ENCODE measurements at regions of chr12 and their contacts with region 1.

Region 1: DNA sequence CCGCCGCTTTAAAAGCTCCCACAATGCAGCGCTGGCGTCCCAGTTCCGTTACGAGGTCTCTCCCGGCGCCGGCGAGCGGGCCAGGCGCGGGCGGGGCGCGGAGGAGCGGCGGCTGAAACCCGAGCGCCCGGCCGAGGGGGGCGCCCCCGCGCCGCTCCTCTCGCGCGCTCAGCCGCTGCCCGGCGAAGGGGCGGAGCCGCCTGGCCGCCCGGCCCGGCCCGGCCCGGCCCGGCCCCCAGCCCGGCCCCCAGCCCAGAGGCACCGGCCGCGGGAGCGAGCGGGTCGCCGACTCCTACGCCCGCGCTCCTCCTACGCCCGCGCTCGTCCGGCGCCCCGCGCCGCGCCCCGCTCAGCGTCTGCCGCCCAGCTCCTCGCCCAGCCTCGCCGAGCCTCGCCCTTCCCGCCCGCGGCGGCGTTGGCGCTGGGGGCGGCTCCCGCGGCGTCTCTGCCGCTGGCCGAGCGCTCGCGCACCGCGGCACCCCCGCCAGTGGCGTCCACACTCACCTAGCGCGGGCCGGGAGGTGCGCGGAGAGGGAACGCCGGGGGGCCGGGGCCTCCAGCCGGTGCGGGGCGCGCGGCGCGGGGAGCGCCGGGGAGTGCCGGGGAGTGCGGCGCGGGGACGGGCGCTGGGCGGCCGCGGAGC is at the start of gene RASSF8:
- DNase-seq: peak; percentile 79 to 83
- ATAC-seq: peak; percentile 82 to 94 (median 92)
- H3K4me3 ChIP-seq: peak within 1 kb of the TSS; percentile 68 to 94 (median 81)
- H3K27ac ChIP-seq: peak within 1 kb of the TSS; percentile 88 to 99 (median 93)
- H3K4me1 ChIP-seq: peaks cover 0 to 44% (median 17%) of the 10 kb centered on the region in 9 donors
- H3K27me3 ChIP-seq: peaks cover 0 to 36% (median 0%) of the 10 kb centered on the region in 7 donors
- CTCF ChIP-seq: no peak
- total RNA-seq, gene RASSF8: 18.8 to 43.9 (median 29.3) TPM

Region 2: GRCh38 chr12:25436203-25437030 is 522.1 kb before region 1 on chr12:
- intact Hi-C with region 1: loop called in 2 of 10 experiments (anchors 5 to 10 kb)
- DNase-seq: peak in 1 of 2 donors; percentile 40
- ATAC-seq: peak in 6 of 8 donors; percentile 52 to 74 (median 56)
- H3K4me3 ChIP-seq: peak overlapping the region in 6 of 10 donors; percentile 19 to 50 (median 40)
- H3K27ac ChIP-seq: no peak overlapping the region
- H3K4me1 ChIP-seq: peaks cover 0 to 5% (median 0%) of the 10 kb centered on the region in 9 donors
- H3K27me3 ChIP-seq: no peaks in the 10 kb centered on the region
- CTCF ChIP-seq: peak; percentile 56 to 92 (median 83)

Region 3: DNA sequence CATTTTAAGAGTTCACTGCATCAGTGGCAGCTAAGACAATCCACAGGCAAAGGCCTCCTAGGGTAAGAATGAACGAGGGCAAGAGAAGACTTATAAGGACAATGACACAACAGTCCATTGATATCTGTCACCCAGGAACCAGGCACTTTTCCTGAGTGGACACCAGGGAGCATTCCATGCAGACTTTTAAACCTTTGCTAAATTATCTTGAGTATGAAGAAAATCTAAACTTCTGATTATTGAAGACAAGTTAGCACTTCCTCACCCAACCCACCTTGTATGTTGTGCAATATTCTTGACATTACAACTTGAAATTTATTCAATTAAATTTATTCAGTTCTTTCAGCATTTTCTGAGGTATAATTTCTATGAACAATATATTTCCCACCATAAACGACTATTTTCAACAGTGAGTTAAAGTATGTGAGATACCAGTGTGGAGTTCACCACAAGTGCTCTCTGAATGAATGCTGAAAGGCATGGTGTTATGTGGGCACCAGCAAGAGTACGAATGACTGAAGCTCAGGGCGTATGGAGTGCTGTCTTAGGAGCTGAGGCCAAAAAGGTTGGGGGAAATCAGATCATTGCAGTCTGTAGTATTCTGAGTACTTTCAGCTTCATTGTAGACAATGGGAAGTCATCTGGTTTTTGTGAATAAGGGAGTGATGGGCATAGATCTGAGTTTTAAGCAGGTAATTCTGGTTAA is 281.2 kb before region 1 on chr12:
- intact Hi-C with region 1: no loop called
- DNase-seq: no peak
- ATAC-seq: peak in 2 of 8 donors; percentile 39 to 42
- H3K4me3 ChIP-seq: no peak overlapping the region
- H3K27ac ChIP-seq: no peak overlapping the region
- H3K4me1 ChIP-seq: no peaks in the 10 kb centered on the region
- H3K27me3 ChIP-seq: no peaks in the 10 kb centered on the region
- CTCF ChIP-seq: peak in 3 of 9 donors; percentile 10 to 52 (median 39)

Region 4: DNA sequence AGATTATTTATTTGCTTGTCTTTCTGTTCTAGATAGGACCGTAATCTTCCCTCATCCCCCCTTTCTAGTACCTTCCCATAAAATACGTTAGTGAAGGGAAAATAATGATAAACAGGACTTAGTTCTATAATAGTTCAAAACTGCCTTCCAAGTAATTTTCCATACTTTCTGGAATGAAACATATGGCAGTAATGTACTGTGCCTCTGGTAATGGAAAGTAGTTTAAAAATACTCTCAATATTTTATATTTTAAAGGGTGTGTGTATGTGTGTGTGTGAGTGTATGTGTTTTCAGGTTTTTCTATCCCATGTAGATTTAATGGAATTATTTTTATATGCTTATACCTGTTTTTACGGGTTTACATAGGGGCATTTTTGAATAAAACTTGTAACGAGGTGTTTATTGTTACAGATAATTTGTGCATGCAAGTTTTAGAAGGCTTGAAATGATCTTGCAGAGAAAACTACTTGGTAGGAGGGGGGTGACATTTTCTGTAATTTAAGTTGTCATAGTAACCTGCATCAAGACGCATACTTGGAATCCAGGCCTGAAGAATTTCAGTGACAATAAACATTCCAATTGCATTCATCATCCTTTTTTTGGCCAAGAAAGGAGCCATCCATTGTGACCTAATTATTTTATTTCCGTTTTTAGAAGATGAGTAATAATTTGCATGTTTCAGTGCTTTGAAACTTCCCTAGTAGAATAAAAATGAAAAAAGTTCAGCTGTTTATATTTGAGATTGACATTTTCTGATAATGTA is 38.8 kb after region 1 on chr12:
- intact Hi-C with region 1: loop called in 1 of 10 experiments (anchors 5 kb)
- DNase-seq: no peak
- ATAC-seq: peak in 5 of 8 donors; percentile 48 to 69 (median 56)
- H3K4me3 ChIP-seq: no peak overlapping the region
- H3K27ac ChIP-seq: no peak overlapping the region
- H3K4me1 ChIP-seq: peaks cover 0 to 46% (median 21%) of the 10 kb centered on the region in 9 donors
- H3K27me3 ChIP-seq: no peaks in the 10 kb centered on the region
- CTCF ChIP-seq: no peak

Region 5: DNA sequence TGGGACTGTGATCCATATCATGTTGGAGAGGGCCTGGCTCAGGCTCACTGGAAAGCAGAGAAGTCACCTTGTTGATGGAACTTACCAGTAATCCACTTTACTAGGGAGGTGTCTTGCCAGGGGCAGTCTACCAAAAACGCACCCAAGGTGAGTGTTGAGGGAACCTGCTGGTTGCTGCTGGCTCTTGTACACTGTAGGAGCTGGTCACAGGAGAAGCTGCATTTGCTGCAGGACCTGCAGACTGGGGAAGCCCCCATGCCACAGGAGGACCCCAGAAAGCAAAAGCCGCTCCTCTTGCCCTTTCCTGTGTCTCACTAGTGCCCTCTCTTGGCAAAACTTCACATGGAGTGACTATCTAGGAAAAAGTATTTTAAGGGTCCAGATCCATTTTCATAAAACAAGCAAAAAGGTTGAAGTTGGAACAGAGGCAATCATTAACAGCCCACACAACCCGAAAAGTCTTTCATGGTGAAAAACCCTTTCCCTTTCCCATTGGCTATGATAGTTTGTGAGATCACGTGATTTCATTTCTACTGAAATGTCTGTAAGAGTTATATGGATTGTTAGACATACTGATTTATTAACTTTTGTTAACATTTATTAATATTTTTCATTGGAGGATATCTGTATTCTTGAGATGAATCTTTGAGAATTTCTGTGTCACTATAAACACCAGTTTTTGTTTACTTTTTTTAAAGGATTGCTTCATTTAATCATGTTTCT is 59.1 kb after region 1 on chr12:
- intact Hi-C with region 1: loop called in 9 of 10 experiments (anchors 2 to 10 kb)
- DNase-seq: peak in 1 of 2 donors; percentile 12
- ATAC-seq: peak in 6 of 8 donors; percentile 28 to 77 (median 44)
- H3K4me3 ChIP-seq: peak overlapping the region in 1 of 10 donors; percentile 10
- H3K27ac ChIP-seq: no peak overlapping the region
- H3K4me1 ChIP-seq: peaks cover 0 to 50% (median 18%) of the 10 kb centered on the region in 9 donors
- H3K27me3 ChIP-seq: no peaks in the 10 kb centered on the region
- CTCF ChIP-seq: peak; percentile 30 to 75 (median 61)

Region 6: DNA sequence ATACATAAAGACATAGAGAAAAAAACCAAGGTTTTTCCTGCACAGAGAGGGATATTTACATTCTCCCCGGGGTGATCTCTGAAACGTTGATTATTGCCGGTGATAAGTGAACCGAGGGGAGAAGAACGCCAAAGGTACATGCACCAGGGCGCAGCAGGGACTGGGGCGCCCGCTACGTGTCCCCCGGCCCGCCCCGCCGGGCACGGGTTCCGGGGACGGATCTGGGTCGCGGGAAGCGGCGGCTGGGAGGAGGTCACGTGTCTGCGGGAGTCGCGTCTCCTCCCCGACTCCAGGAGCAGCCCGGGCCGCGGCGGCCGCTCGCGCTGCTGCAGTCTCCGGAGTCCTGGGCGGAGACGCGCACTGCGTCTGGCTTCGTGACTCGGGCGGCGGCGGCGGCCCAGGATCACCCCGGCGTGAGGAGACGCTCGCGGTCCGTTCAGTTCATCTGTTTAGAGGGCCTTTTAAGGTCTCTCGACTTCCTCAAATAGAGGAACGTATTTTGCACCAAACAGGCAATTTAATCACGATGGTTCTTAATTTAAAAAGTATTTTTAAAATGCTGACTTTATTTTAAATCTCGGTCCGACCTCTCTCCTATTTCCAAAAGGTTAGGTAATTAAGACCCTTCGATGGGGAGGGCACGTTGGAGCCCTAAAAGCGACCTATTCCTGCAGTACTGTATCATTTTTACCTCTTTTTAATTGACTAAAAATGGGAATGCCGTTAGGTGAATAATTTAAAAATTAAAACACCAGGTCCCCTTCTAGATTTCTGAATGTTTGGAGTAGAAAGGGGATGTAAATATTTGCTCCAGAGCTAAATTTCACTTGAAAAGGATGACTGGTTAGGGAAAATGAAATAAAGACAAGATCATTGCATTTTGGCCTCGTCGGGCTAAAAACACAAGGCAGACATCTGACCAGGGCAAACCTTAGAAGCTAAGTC is 168.1 kb after region 1 on chr12:
- intact Hi-C with region 1: loop called in 1 of 10 experiments (anchors 10 kb)
- DNase-seq: peak; percentile 87 to 89
- ATAC-seq: peak; percentile 75 to 89 (median 83)
- H3K4me3 ChIP-seq: peak overlapping the region; percentile 46 to 80 (median 65)
- H3K27ac ChIP-seq: peak overlapping the region; percentile 65 to 98 (median 93)
- H3K4me1 ChIP-seq: peaks cover 3 to 48% (median 17%) of the 10 kb centered on the region in 9 donors
- H3K27me3 ChIP-seq: peaks cover 0 to 75% (median 0%) of the 10 kb centered on the region in 7 donors
- CTCF ChIP-seq: peak in 3 of 9 donors; percentile 37 to 39 (median 37)